ENCODE measurements at regions of chr6 and their contacts with region 1.

Region 1: DNA sequence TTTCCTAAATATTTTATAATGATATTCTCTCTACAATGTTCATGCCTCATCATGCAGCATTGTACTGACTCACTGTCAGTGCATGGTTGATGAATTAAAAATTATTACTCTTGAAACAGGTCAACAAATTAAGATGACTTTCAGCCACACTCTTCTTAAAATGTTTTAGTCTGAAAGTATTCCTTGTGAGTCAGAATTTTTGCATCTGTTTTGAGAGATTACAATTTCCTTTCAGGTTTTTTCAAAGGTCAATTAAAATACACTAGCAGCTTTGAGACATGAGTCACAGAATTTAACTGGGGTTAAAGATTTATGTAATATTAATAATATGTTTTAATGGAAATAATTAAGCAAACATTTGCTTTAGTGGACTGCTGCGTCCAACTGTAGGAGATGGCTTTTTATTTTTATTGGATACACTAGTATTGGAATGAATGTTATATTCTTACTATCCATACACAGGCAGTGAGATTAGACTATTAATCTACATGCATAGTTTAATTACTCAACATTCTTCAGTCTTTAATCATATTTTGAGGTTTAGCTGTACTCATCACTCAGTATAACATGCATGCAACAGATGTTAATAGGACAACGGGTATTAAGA is 9.7 kb downstream of the COL12A1 start:
- DNase-seq: peak; percentile 57
- ATAC-seq: peak; percentile 90
- H3K4me3 ChIP-seq: no peak overlapping the region
- H3K27ac ChIP-seq: peak overlapping the region; percentile 50
- H3K4me1 ChIP-seq: peaks cover 15% of the 10 kb centered on the region
- H3K27me3 ChIP-seq: no peaks in the 10 kb centered on the region
- CTCF ChIP-seq: no peak

Region 2: DNA sequence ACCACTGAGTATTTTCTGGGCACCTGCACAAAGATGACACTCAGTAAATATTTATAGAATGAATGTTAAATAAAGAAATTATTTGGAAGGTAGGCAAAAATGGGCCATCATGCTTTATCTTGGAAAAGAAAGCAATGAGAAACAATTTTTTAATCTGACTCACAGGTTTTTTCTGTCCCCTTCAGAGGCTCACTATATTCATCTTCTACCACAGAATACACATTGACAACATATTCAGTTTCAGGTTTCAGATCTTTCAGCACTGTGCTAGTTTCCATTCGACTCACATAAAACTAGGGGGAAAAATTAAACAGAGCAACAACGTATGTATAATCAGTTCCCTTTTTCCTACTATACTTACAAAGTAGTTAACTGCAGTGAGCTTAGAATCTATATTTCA is 48.7 kb before region 1 on chr6:
- CTCF ChIA-PET with region 1: no interaction called
- POLR2A ChIA-PET with region 1: no interaction called
- intact Hi-C with region 1: loop called (anchors 5 kb)
- DNase-seq: peak; percentile 57
- ATAC-seq: peak; percentile 88
- H3K4me3 ChIP-seq: no peak overlapping the region
- H3K27ac ChIP-seq: peak overlapping the region; percentile 23; the same call in 1 of the 2 replicates
- H3K4me1 ChIP-seq: peaks cover 20% of the 10 kb centered on the region
- H3K27me3 ChIP-seq: no peaks in the 10 kb centered on the region
- CTCF ChIP-seq: no peak

Region 3: DNA sequence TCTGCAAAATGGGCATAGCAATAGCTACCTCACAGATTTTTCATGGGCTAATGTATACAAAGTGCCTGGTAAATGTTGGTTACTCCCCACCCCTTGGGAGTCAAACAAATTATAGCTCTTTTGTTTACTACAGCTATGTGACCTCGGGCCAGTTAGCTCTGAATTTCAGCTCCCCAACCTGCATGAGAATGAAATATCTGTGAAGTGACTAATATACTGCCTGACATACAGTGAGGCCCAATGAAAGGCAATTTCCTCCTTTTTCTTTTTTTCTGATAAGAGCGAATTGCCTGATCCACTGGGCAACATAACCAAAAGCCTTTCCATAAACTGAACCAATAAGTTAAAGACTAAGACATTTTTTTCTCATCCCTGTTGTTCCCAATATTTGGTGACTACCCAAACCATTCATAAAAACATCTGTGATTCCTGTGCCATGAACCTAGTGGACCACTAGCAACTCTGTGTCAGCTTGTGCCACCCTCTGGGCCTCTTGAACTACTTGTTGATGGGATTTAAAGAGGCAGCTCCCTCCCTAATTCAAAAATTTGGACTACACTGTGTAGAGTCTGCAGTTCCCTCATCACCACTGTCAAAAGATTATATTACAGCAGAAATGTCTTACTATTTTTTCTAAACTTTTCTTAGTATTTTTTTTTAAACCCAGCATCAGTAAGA is 180.3 kb after region 1 on chr6:
- CTCF ChIA-PET with region 1: no interaction called
- POLR2A ChIA-PET with region 1: no interaction called
- intact Hi-C with region 1: no loop called
- DNase-seq: peak; percentile 14
- ATAC-seq: 0 out of 2 replicates have a peak, but pooled peaks have one; percentile 20
- H3K4me3 ChIP-seq: no peak overlapping the region
- H3K27ac ChIP-seq: no peak overlapping the region
- H3K4me1 ChIP-seq: no peaks in the 10 kb centered on the region
- H3K27me3 ChIP-seq: no peaks in the 10 kb centered on the region
- CTCF ChIP-seq: no peak

Region 4: DNA sequence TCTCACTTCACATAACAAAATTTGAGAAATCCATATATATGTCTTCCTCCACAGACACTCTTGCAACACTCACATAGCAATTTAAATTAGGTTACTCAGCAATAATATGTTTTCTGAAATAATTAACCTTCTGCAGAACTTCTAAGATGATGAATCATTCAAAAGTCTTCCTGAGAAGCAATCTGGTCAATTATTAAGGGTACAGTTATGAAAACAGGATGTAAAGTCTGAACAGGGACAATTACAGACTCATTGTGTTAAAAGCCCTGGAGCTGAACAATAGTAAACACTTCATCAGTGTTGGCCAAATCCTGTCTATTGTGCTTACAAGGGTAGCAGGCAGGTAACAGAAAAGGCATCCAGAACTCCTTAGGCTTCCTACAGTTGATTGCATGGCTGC is 222.0 kb after region 1 on chr6:
- CTCF ChIA-PET with region 1: no interaction called
- POLR2A ChIA-PET with region 1: no interaction called
- intact Hi-C with region 1: no loop called
- DNase-seq: peak; percentile 16
- ATAC-seq: peak; percentile 54; the same call in 1 of the 2 replicates
- H3K4me3 ChIP-seq: no peak overlapping the region
- H3K27ac ChIP-seq: no peak overlapping the region
- H3K4me1 ChIP-seq: peaks cover 21% of the 10 kb centered on the region
- H3K27me3 ChIP-seq: no peaks in the 10 kb centered on the region
- CTCF ChIP-seq: no peak

Measured in PC-3 (cell line).